Ovary (tissue), 10 donors: ENCODE measurements at regions of chr19 and their contacts with region 1.

Region 1: GRCh38 chr19:35931161-35931873 is 4.9 kb upstream of the LRFN3 start:
- DNase-seq: peak; percentile 99
- H3K4me3 ChIP-seq: no peak overlapping the region
- H3K27ac ChIP-seq: peak overlapping the region; percentile 29 to 66
- H3K4me1 ChIP-seq: peaks cover 1% of the 10 kb centered on the region
- H3K27me3 ChIP-seq: no peaks in the 10 kb centered on the region
- CTCF ChIP-seq: peak; percentile 73 to 98 (median 97)
- EP300 ChIP-seq: no peak
- POLR2A ChIP-seq: peak; percentile 50

Region 2: GRCh38 chr19:35693830-35694599 is 237.3 kb before region 1 on chr19:
- intact Hi-C with region 1: loop called in 3 of 4 experiments (anchors 2 to 10 kb)
- DNase-seq: peak; percentile 77 to 88 (median 86)
- H3K4me3 ChIP-seq: no peak overlapping the region
- H3K27ac ChIP-seq: no peak overlapping the region
- H3K4me1 ChIP-seq: no peaks in the 10 kb centered on the region
- H3K27me3 ChIP-seq: no peaks in the 10 kb centered on the region
- CTCF ChIP-seq: peak; percentile 88 to 97 (median 96)
- EP300 ChIP-seq: no peak
- POLR2A ChIP-seq: no peak

Region 3: DNA sequence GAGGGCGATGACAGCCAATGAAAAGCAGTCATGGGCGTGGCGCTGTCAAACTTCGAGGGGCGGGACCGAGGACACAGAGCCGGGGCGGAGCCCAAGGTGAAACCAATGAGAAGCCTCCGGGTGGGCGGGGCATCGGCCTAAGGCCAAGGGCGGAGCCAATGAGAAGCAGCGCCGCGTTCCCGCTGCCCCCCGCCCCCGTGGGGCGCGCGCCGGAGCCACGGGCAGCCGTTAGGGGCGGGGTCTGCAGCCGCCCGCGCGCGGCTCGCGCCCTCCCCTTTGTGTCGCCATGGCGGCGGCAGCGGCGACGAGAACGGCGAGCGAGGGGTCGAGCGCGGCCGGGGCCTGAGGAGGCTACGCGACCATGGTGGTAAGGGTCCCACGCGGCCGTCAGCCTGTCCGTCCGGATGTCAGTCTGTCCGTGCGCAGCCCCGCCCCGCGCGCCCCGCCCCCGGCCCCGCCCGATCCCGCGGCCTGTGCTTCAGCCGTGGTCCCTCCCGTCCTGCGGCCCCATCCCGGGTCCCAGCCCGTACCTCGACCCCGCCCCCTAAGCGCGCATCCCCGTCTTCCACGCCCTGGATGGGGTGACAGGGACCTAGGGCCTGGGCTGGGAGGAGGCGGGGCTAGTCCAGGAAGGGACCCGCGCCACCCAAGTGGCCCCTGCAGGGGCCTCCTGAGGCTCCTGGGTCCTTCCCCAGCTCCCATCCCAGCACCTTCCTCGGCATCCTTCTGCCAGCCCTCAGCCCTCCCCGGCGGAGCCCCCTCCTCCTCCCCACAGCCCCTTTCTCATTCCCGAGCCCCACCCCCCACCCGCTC is 155.8 kb before region 1 on chr19 and contains the start of gene ARHGAP33:
- intact Hi-C with region 1: loop called in 2 of 4 experiments (anchors 5 to 10 kb)
- DNase-seq: peak; percentile 99 to 100 (median 100)
- H3K4me3 ChIP-seq: peak within 1 kb of the TSS; percentile 85
- H3K27ac ChIP-seq: no peak within 1 kb of the TSS
- H3K4me1 ChIP-seq: peaks cover 7% of the 10 kb centered on the region
- H3K27me3 ChIP-seq: no peaks in the 10 kb centered on the region
- CTCF ChIP-seq: no peak
- EP300 ChIP-seq: no peak
- POLR2A ChIP-seq: no peak
- total RNA-seq, gene ARHGAP33: 14.7 to 52.7 (median 46.1) TPM

Region 4: DNA sequence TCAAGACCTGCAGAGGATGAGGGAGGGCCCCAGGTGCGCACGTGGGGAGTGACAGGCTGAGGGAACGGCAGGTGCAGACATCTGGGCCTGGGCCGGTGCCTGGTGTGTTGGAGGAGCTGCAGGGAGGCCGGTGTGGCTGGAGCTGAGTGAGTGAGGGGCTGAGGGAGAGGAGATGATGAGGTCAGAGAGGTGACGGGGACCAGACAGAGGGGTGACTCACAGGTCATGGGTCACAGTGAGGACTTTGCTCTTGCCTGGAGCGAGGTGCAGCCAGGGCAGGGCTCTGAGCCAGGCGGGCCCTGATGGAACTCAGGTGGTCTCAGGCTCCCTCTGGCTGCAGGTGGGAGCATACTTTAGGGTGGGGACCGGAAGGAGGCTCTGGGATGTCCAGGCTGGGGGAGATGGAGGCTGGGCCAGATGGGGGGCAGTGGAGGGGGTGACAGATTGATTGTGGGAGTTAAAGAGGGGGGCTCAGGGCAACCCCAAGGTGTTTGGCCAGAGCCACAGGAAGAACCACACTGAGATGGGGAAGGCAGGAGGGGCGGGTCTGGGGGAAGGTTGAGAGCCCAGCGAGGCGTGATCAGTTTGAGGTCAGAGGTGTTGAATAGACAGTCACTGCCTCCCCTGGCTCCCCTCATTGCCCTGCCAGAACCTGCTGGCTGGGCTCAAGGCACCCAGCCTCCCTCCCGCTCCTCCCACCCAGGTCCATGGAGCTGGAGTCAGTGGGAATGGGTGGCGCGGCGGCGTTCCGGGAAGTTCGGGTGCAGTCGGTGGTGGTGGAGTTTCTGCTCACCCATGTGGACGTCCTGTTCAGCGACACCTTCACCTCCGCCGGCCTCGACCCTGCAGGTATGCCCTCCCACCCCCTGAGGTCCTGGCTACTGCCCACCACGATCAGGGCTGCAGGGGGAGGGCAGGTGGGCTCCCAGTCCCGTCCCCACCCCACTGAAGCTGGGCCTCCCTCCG is 147.6 kb before region 1 on chr19:
- intact Hi-C with region 1: loop called in 2 of 4 experiments (anchors 5 to 10 kb)
- DNase-seq: peak in 1 of 5 donors; percentile 23
- H3K4me3 ChIP-seq: no peak overlapping the region
- H3K27ac ChIP-seq: no peak overlapping the region
- H3K4me1 ChIP-seq: no peaks in the 10 kb centered on the region
- H3K27me3 ChIP-seq: no peaks in the 10 kb centered on the region
- CTCF ChIP-seq: no peak
- EP300 ChIP-seq: no peak
- POLR2A ChIP-seq: no peak

Region 5: DNA sequence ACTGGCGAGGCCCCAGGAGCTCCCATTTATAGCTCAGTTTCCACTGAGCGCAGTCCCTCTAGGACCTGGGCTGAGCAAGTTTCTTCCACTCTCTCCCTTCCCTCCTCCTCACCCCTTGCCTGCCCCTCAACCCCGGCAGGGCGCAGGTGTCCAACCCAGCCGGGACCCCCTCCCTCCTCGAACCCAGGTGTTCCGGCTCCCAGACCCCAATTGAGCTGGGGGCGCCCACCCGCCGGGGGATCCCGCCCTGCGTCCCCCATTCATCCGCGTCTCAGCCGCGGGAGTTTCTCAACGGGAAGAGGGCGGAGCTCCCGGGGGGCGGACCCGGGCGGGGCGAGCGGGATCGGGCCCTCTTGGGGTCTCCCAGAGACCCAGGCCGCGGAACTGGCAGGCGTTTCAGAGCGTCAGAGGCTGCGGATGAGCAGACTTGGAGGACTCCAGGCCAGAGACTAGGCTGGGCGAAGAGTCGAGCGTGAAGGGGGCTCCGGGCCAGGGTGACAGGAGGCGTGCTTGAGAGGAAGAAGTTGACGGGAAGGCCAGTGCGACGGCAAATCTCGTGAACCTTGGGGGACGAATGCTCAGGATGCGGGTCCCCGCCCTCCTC is 74.7 kb before region 1 on chr19 and contains the start of gene KIRREL2:
- intact Hi-C with region 1: no loop called
- DNase-seq: no peak
- H3K4me3 ChIP-seq: no peak within 1 kb of the TSS
- H3K27ac ChIP-seq: no peak within 1 kb of the TSS
- H3K4me1 ChIP-seq: no peaks in the 10 kb centered on the region
- H3K27me3 ChIP-seq: no peaks in the 10 kb centered on the region
- CTCF ChIP-seq: no peak
- EP300 ChIP-seq: no peak
- POLR2A ChIP-seq: no peak
- total RNA-seq, gene KIRREL2: 0.12 to 0.15 TPM in 2 of 7 donors, not detected in the others

Region 6: GRCh38 chr19:35879770-35880317 is 51.5 kb before region 1 on chr19:
- intact Hi-C with region 1: loop called (anchors 5 kb)
- DNase-seq: peak; percentile 70 to 90 (median 82)
- H3K4me3 ChIP-seq: no peak overlapping the region
- H3K27ac ChIP-seq: no peak overlapping the region
- H3K4me1 ChIP-seq: no peaks in the 10 kb centered on the region
- H3K27me3 ChIP-seq: no peaks in the 10 kb centered on the region
- CTCF ChIP-seq: no peak
- EP300 ChIP-seq: no peak
- POLR2A ChIP-seq: no peak

Region 7: GRCh38 chr19:35899547-35900214 is 31.6 kb before region 1 on chr19:
- intact Hi-C with region 1: loop called in 1 of 4 experiments (anchors 5 kb)
- DNase-seq: peak; percentile 78 to 87 (median 81)
- H3K4me3 ChIP-seq: peak overlapping the region; percentile 51
- H3K27ac ChIP-seq: peak overlapping the region; percentile 56 to 72
- H3K4me1 ChIP-seq: peaks cover 4% of the 10 kb centered on the region
- H3K27me3 ChIP-seq: no peaks in the 10 kb centered on the region
- CTCF ChIP-seq: no peak
- EP300 ChIP-seq: no peak
- POLR2A ChIP-seq: peak; percentile 50